ENCODE measurements at regions of chr12 and their contacts with region 1.

Region 1: GRCh38 chr12:94101738-94102660 is 46.4 kb upstream of the PLXNC1 start:
- DNase-seq: peak; percentile 91
- H3K4me3 Mint-ChIP-seq: peak overlapping the region; percentile 75
- H3K27ac Mint-ChIP-seq: peak overlapping the region; percentile 35
- H3K4me1 Mint-ChIP-seq: peaks cover 24% of the 10 kb centered on the region
- H3K27me3 Mint-ChIP-seq: no peaks in the 10 kb centered on the region

Region 2: GRCh38 chr12:92784795-92785562 is 1317.0 kb before region 1 on chr12:
- CTCF ChIA-PET with region 1: interaction called, 23 read pairs
- POLR2A ChIA-PET with region 1: no interaction called
- intact Hi-C with region 1: no loop called
- DNase-seq: no peak
- H3K4me3 Mint-ChIP-seq: no peak overlapping the region
- H3K27ac Mint-ChIP-seq: no peak overlapping the region
- H3K4me1 Mint-ChIP-seq: no peaks in the 10 kb centered on the region
- H3K27me3 Mint-ChIP-seq: no peaks in the 10 kb centered on the region

Region 3: DNA sequence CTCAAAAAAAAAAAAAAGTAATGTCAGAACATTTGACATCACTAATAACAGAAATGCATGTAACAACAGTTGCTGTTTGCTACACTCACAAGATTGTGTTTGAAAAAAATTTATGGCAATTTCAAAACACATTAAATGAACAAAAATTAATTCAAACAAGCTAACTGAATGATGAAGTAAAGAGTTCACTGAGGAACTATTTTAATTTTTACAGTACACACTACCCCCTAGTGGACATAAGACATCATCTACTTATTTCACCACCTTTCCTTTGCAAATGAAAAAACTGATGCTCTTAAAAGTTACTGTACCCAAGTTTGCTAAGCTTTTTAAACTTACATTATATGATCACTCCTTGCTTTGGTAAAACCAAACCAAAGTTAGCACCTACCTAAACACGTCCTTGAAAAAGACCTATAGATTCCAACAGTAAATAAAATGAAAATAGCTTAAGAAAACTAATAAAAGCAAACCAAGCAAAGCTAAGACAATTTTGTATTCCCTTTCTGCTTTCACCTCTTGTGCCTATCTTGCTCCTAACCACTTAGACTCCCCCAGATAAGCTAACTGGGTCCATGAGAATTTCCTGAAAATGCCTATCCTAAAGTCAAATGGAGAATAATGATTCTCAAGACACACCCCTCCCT is 682.5 kb before region 1 on chr12:
- CTCF ChIA-PET with region 1: interaction called, 36 read pairs
- POLR2A ChIA-PET with region 1: no interaction called
- intact Hi-C with region 1: loop called (anchors 5 kb)
- DNase-seq: no peak
- H3K4me3 Mint-ChIP-seq: no peak overlapping the region
- H3K27ac Mint-ChIP-seq: no peak overlapping the region
- H3K4me1 Mint-ChIP-seq: peaks cover 85% of the 10 kb centered on the region
- H3K27me3 Mint-ChIP-seq: no peaks in the 10 kb centered on the region

Region 4: DNA sequence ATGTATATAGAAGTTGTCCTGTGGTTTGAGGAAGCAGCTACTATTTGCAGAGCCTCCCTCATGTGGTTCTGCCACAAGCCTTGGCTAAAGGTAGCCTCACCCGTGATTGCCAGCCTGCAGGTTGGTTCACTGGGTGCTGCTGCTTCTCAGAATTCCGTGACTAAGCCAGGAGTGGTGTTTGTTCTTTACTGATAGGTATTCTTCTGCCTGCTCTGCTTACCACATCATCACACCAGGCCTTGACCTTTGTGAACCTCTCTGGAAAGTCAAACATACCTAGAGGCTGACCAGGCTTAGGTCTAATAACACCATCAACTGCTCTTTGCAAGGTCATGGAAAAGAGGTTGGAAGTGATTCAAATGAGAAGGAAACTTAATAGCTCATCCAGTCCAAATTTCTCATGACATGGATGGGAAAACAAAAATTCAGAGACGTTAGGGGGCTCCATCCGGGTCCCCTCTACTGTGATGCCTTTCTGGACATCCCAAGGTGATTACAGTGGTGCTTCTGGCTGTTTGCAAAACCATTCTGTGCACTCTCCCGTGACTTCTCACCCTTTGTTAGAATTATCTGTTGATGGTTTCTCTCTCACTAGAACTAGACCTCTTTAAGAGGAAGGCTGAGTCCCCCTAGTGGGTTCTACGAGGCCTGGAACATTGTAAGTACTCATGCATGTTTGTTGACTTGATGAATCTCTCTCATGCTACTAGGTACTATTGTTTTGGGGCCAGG is 538.0 kb before region 1 on chr12:
- CTCF ChIA-PET with region 1: interaction called, 190 read pairs
- POLR2A ChIA-PET with region 1: interaction called, 16 read pairs
- intact Hi-C with region 1: loop called (anchors 1 kb)
- DNase-seq: no peak
- H3K4me3 Mint-ChIP-seq: no peak overlapping the region
- H3K27ac Mint-ChIP-seq: no peak overlapping the region
- H3K4me1 Mint-ChIP-seq: peaks cover 4% of the 10 kb centered on the region
- H3K27me3 Mint-ChIP-seq: no peaks in the 10 kb centered on the region

Region 5: GRCh38 chr12:93766796-93767523 is 335.0 kb before region 1 on chr12:
- CTCF ChIA-PET with region 1: interaction called, 211 read pairs
- POLR2A ChIA-PET with region 1: interaction called, 8 read pairs
- intact Hi-C with region 1: loop called (anchors 1 kb)
- DNase-seq: peak; percentile 48
- H3K4me3 Mint-ChIP-seq: no peak overlapping the region
- H3K27ac Mint-ChIP-seq: peak overlapping the region; percentile 44
- H3K4me1 Mint-ChIP-seq: peaks cover 30% of the 10 kb centered on the region
- H3K27me3 Mint-ChIP-seq: no peaks in the 10 kb centered on the region

Region 6: DNA sequence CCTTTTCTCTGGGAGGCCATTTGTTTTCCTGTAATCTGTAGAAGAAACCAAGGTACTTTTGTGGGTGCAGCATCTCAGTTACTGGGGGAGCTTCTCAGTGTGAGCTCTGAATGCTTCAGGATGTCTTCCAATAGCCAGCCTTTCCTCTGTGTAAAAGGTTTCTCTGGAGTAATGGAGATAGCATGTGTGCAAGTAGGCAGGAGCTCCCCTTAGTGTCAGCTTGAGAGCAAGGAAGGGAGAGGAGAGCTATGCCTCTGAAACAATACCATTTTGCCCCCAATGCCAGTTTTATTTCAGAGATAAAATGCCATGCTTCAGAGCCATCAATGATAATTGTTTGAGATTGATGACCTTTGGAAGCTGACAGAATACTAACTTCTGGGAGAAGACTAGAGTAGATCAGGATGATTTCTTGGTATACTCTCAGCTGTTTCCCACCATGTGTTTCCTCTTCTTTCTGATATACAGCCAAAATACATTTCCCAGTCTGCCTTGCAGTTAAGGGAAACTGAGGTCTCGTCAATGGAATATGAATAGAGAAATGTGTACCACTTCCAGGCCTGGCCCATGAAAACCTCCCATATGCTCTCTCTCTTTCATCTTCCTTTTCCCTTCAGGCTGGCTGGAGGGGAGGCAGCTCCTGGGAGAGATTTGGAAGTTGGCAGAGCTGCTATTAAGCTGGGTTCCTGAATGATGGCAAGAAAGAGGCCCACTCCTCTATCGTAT is 299.1 kb before region 1 on chr12:
- CTCF ChIA-PET with region 1: interaction called, 13 read pairs
- POLR2A ChIA-PET with region 1: no interaction called
- intact Hi-C with region 1: no loop called
- DNase-seq: no peak
- H3K4me3 Mint-ChIP-seq: no peak overlapping the region
- H3K27ac Mint-ChIP-seq: no peak overlapping the region
- H3K4me1 Mint-ChIP-seq: peaks cover 45% of the 10 kb centered on the region
- H3K27me3 Mint-ChIP-seq: no peaks in the 10 kb centered on the region

Region 7: GRCh38 chr12:94133964-94134795 is 32.2 kb after region 1 on chr12:
- CTCF ChIA-PET with region 1: interaction called, 12 read pairs
- POLR2A ChIA-PET with region 1: no interaction called
- intact Hi-C with region 1: no loop called
- DNase-seq: peak; percentile 31
- H3K4me3 Mint-ChIP-seq: no peak overlapping the region
- H3K27ac Mint-ChIP-seq: no peak overlapping the region
- H3K4me1 Mint-ChIP-seq: peaks cover 2% of the 10 kb centered on the region
- H3K27me3 Mint-ChIP-seq: no peaks in the 10 kb centered on the region

Region 8: GRCh38 chr12:94200069-94200468 is 98.1 kb after region 1 on chr12:
- CTCF ChIA-PET with region 1: no interaction called
- POLR2A ChIA-PET with region 1: no interaction called
- intact Hi-C with region 1: no loop called
- DNase-seq: no peak
- H3K4me3 Mint-ChIP-seq: no peak overlapping the region
- H3K27ac Mint-ChIP-seq: no peak overlapping the region
- H3K4me1 Mint-ChIP-seq: peaks cover 23% of the 10 kb centered on the region
- H3K27me3 Mint-ChIP-seq: no peaks in the 10 kb centered on the region